Left cardiac atrium (tissue), 4 donors: ENCODE measurements at regions of chr7 and their contacts with region 1.

Region 1: GRCh38 chr7:91264046-91264923 is at the start of gene FZD1:
- DNase-seq: peak; percentile 97
- ATAC-seq: peak; percentile 91 to 95
- total RNA-seq, gene FZD1: 9.4 to 14.5 TPM

Region 2: GRCh38 chr7:91082852-91083495 is 181.3 kb before region 1 on chr7:
- intact Hi-C with region 1: loop called in 1 of 2 experiments (anchors 5 kb)
- DNase-seq: no peak
- ATAC-seq: no peak